GM12878 (cell line): ENCODE measurements at regions of chr4 and their contacts with region 1.

Region 1: DNA sequence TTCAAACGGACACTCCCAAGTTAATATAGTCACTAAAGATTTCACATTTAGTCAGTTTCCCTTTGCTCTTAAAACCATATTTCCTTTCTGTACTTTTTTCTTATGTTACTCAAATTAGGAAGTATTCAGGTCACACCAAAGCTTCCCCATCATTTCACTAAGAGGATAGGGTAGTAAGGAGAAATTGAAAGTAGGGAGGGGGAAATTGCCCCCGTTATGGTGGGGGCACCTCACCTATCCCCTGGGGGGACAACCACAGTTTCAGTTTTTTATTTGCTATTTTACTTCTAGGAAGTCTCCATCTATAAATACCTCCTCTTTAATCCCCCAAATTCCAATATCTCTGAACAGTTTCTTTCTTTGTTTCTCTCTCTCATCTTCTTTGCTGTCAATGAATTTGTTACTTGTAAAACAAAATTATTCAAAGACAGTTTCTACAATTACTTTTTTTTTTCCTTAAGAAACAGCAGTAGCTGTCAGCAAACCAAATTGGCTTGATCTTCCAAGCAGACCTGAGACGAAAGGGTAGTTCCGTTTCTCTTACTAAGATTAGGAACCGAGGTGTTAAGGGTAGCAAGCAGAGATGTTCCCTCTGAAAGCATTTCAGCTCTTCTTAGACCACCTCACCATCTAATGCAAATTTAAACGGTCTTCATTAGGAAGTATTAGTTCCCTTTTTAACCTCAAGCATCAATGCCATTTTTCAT is 160.2 kb upstream of the KLF3 start:
- DNase-seq: peak; percentile 86
- ATAC-seq: peak; percentile 95
- H3K4me3 ChIP-seq: no peak overlapping the region; the same call in 1 of the 2 replicates
- H3K27ac ChIP-seq: peak overlapping the region; percentile 47
- H3K4me1 ChIP-seq: peaks cover 31% of the 10 kb centered on the region
- H3K27me3 ChIP-seq: no peaks in the 10 kb centered on the region
- CTCF ChIP-seq: no peak
- EP300 ChIP-seq: peak; percentile 59 to 83; a peak in 1 of 4 replicates
- POLR2A ChIP-seq: no peak
- RAD21 ChIP-seq: no peak; the same call in 1 of the 2 replicates

Region 2: GRCh38 chr4:38062088-38062893 is 441.6 kb before region 1 on chr4:
- CTCF ChIA-PET with region 1: no interaction called
- POLR2A ChIA-PET with region 1: no interaction called
- RAD21 ChIA-PET with region 1: no interaction called
- SMC1A ChIA-PET with region 1: no interaction called
- in situ Hi-C with region 1: no loop called
- intact Hi-C with region 1: loop called (anchors 5 kb)
- DNase-seq: no peak
- ATAC-seq: peak; percentile 93
- H3K4me3 ChIP-seq: no peak overlapping the region
- H3K27ac ChIP-seq: peak overlapping the region; percentile 6
- H3K4me1 ChIP-seq: peaks cover 3% of the 10 kb centered on the region; the same call in 1 of the 2 replicates
- H3K27me3 ChIP-seq: no peaks in the 10 kb centered on the region
- CTCF ChIP-seq: peak; percentile 67 to 85 (median 80)
- EP300 ChIP-seq: no peak
- POLR2A ChIP-seq: no peak
- RAD21 ChIP-seq: peak; percentile 95

Region 3: DNA sequence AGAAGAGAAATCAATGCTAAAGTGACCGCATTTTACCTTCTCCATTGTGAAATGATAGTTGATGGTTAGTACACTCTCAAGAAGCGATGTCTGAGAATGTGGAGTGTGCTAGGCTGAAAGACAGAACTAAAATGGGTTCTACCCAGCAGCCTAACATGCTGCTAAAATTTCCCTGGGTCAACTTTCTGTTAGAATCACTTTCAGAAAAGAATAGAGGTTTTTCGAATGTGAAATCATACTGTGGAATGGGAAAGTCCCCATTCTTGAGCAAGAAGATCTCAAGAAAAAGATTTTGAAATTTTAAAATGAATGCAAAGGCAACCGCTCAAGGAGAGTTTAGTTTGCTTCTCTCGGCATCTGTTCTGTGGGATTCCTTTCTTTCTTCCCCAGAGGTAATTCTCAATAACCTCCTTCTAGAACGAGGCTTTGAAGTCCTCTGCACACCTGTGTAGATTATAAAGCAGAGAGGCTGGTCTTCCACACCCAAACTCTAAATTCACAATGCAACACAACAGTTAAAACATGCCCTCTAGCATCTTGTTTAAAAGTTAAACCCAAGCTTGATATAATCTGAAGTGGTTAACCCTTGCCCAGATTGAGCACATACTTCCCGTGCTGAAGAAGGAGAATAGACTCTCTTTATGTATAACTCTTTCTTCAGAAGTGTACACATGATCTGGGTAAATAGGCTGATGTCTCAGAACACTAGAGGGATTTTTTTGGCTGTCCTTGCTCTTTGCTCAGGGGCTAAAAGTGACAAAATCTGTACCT is 48.6 kb before region 1 on chr4:
- CTCF ChIA-PET with region 1: interaction called, 3 read pairs
- POLR2A ChIA-PET with region 1: no interaction called
- RAD21 ChIA-PET with region 1: no interaction called
- SMC1A ChIA-PET with region 1: interaction called, 4 read pairs
- in situ Hi-C with region 1: no loop called
- intact Hi-C with region 1: loop called (anchors 1 kb)
- DNase-seq: peak; percentile 53
- ATAC-seq: peak; percentile 93
- H3K4me3 ChIP-seq: peak overlapping the region; percentile 40; the same call in 1 of the 2 replicates
- H3K27ac ChIP-seq: peak overlapping the region; percentile 85
- H3K4me1 ChIP-seq: peaks cover 41% of the 10 kb centered on the region
- H3K27me3 ChIP-seq: no peaks in the 10 kb centered on the region
- CTCF ChIP-seq: no peak
- EP300 ChIP-seq: no peak
- POLR2A ChIP-seq: no peak
- RAD21 ChIP-seq: no peak

Region 4: GRCh38 chr4:38523524-38524448 is 19.9 kb after region 1 on chr4:
- CTCF ChIA-PET with region 1: interaction called, 4 read pairs
- POLR2A ChIA-PET with region 1: no interaction called
- RAD21 ChIA-PET with region 1: interaction called, 5 read pairs
- SMC1A ChIA-PET with region 1: interaction called, 22 read pairs
- in situ Hi-C with region 1: no loop called
- intact Hi-C with region 1: no loop called
- DNase-seq: peak; percentile 82
- ATAC-seq: peak; percentile 99
- H3K4me3 ChIP-seq: peak overlapping the region; percentile 35; the same call in 1 of the 2 replicates
- H3K27ac ChIP-seq: peak overlapping the region; percentile 57
- H3K4me1 ChIP-seq: peaks cover 14% of the 10 kb centered on the region
- H3K27me3 ChIP-seq: no peaks in the 10 kb centered on the region
- CTCF ChIP-seq: no peak
- EP300 ChIP-seq: peak; percentile 46 to 60; a peak in 3 of 4 replicates
- POLR2A ChIP-seq: no peak
- RAD21 ChIP-seq: peak; percentile 15

Region 5: DNA sequence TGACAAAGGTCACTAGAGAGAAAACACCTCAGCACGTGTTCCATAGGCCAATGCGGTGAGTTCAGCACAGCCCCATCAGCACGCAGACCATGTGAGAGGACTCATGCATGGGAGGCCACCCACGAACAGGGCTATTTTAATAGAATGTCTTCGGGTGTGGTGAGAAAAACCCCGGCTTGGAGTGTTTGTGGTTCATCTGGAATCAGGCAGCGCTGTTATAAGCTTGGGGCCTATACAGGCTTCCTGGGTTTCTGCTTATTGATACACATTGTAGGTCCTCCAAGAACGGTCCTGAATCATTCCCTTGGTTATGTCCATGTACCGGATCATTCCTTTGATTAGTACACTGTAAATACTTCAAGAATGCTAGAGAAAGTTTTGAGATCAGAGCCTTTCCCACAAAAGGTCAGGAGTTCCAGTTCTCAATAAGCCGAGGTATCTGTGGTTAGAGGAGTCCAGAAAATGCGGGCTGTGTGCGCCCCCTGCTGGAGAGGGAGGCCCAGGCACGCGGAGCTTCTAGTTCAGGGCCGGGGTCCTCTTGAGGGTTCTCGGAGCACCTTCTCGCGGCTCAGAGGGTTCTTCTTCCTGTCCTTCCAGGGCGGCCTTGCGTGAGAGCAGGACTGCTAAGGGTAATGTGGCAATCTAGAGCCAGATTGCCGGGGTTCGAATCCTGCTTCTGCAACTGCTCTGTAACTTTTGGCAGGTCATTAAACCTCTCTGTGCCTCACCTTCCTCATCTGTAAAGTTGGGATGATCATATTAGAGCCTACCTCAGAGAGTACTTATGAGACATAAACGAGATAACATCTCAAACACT is 227.2 kb after region 1 on chr4:
- CTCF ChIA-PET with region 1: no interaction called
- POLR2A ChIA-PET with region 1: no interaction called
- RAD21 ChIA-PET with region 1: no interaction called
- SMC1A ChIA-PET with region 1: interaction called, 3 read pairs
- in situ Hi-C with region 1: no loop called
- intact Hi-C with region 1: loop called (anchors 5 kb)
- DNase-seq: peak; percentile 87
- ATAC-seq: peak; percentile 97
- H3K4me3 ChIP-seq: no peak overlapping the region
- H3K27ac ChIP-seq: peak overlapping the region; percentile 57
- H3K4me1 ChIP-seq: peaks cover 16% of the 10 kb centered on the region
- H3K27me3 ChIP-seq: no peaks in the 10 kb centered on the region; a peak in 1 of 4 replicates
- CTCF ChIP-seq: peak; percentile 69 to 96 (median 89)
- EP300 ChIP-seq: peak; percentile 75 to 91; a peak in 3 of 4 replicates
- POLR2A ChIP-seq: no peak
- RAD21 ChIP-seq: peak; percentile 97